GM12878 (cell line): ENCODE measurements at regions of chr15 and their contacts with region 1.

Region 1: GRCh38 chr15:63891079-63891767 is 57.5 kb upstream of the HERC1 start:
- DNase-seq: peak; percentile 72
- ATAC-seq: peak; percentile 67
- H3K4me3 ChIP-seq: no peak overlapping the region
- H3K27ac ChIP-seq: peak overlapping the region; percentile 79
- H3K4me1 ChIP-seq: peaks cover 62% of the 10 kb centered on the region
- H3K27me3 ChIP-seq: no peaks in the 10 kb centered on the region
- CTCF ChIP-seq: peak; percentile 80 to 88 (median 86)
- EP300 ChIP-seq: no peak
- POLR2A ChIP-seq: no peak
- RAD21 ChIP-seq: peak; percentile 88

Region 2: GRCh38 chr15:63833021-63833696 is 58.1 kb before region 1 on chr15:
- CTCF ChIA-PET with region 1: interaction called, 35 read pairs
- POLR2A ChIA-PET with region 1: interaction called, 5 read pairs
- RAD21 ChIA-PET with region 1: interaction called, 34 read pairs
- SMC1A ChIA-PET with region 1: interaction called, 59 read pairs
- in situ Hi-C with region 1: no loop called
- intact Hi-C with region 1: loop called (anchors 2 kb)
- DNase-seq: no peak
- ATAC-seq: peak; percentile 68
- H3K4me3 ChIP-seq: peak overlapping the region; percentile 99
- H3K27ac ChIP-seq: peak overlapping the region; percentile 99
- H3K4me1 ChIP-seq: peaks cover 10% of the 10 kb centered on the region
- H3K27me3 ChIP-seq: no peaks in the 10 kb centered on the region
- CTCF ChIP-seq: no peak
- EP300 ChIP-seq: no peak
- POLR2A ChIP-seq: no peak
- RAD21 ChIP-seq: no peak

Region 3: DNA sequence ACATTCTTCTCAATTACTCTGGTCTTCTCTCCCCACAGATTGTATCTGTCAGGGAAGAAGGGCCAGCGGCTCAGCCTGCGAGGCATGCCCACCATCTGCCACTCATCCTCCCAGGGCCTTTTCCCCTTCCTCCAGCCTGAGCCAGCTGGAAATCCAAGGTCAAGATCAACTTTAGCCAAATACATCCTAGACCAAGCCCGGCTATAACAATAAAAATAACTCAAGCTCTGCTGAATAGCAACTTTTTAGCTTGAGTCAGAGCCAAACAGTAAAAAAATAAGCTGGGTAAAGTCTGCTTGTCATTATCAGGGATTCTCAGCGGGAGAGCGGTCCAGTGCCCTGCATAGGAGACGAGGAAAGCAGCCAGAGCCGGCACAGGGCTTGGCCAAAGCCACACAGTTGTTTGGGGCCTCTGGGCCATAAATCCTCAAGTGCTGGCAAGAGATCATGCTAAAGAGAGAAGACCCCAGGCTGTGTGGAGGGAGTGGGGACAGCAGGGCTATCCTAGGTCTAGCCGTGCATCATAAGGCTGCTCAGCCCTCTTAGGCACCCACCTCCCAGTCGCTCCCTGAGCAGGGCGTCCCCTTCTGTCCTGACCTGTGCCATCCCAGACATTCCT is 18.7 kb after region 1 on chr15:
- CTCF ChIA-PET with region 1: interaction called, 5 read pairs
- POLR2A ChIA-PET with region 1: no interaction called
- RAD21 ChIA-PET with region 1: interaction called, 18 read pairs
- SMC1A ChIA-PET with region 1: interaction called, 9 read pairs
- in situ Hi-C with region 1: no loop called
- intact Hi-C with region 1: no loop called
- DNase-seq: no peak
- ATAC-seq: no peak
- H3K4me3 ChIP-seq: no peak overlapping the region
- H3K27ac ChIP-seq: no peak overlapping the region
- H3K4me1 ChIP-seq: peaks cover 14% of the 10 kb centered on the region
- H3K27me3 ChIP-seq: no peaks in the 10 kb centered on the region
- CTCF ChIP-seq: no peak
- EP300 ChIP-seq: no peak
- POLR2A ChIP-seq: no peak
- RAD21 ChIP-seq: no peak

Region 4: GRCh38 chr15:63970621-63971426 is 79.6 kb after region 1 on chr15:
- CTCF ChIA-PET with region 1: interaction called, 8 read pairs
- POLR2A ChIA-PET with region 1: interaction called, 5 read pairs
- RAD21 ChIA-PET with region 1: interaction called, 56 read pairs
- SMC1A ChIA-PET with region 1: interaction called, 29 read pairs
- in situ Hi-C with region 1: no loop called
- intact Hi-C with region 1: loop called (anchors 1 kb)
- DNase-seq: peak; percentile 85
- ATAC-seq: peak; percentile 96
- H3K4me3 ChIP-seq: peak overlapping the region; percentile 24
- H3K27ac ChIP-seq: peak overlapping the region; percentile 95
- H3K4me1 ChIP-seq: peaks cover 48% of the 10 kb centered on the region
- H3K27me3 ChIP-seq: no peaks in the 10 kb centered on the region
- CTCF ChIP-seq: no peak
- EP300 ChIP-seq: peak; percentile 46 to 90; a peak in 3 of 4 replicates
- POLR2A ChIP-seq: no peak
- RAD21 ChIP-seq: no peak

Region 5: DNA sequence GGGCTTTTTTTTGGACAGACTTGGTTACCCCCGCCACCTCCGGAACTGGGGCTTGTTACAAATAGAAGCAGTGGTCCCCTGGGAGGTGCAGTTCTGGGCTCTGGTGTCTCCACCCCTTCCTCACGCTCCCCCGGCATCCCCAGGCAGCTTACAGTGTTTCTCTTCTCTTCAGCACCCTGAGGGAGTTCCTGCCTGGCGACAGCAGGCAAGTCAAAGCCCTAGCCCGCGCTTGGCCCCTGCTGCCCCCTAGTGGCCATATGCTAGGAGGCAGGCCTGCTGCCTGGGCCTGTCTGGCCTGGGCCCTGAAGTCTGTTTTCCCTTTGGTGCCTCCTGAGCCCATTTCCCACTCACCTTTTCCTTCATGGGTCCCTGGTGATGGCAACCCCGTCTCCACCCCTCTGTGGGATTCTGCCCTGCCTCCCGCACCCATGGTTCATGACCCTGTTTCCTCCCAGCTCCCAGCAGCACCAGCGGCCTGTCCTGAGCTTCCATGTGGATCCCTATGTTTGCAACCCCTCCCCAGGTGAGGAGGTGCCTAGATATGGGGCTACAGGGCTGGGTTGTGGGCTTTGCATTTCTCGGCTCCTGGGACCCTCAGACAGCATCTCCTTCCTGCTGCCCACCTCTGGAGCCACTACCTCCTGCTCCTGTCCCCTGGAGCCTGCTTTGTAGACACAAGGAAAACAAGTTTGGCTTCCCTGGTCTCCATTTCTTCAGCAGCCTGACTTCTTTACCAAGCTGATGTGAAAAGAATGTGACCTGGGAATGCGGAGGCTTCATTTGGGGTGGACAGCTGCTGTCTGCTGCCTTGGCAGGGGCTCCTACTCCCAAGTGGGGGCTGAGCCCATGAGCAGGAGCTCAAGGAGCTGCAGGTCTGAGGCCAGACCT is 262.5 kb after region 1 on chr15:
- CTCF ChIA-PET with region 1: no interaction called
- POLR2A ChIA-PET with region 1: no interaction called
- RAD21 ChIA-PET with region 1: interaction called, 3 read pairs
- SMC1A ChIA-PET with region 1: interaction called, 3 read pairs
- in situ Hi-C with region 1: no loop called
- intact Hi-C with region 1: loop called (anchors 2 kb)
- DNase-seq: peak; percentile 86
- ATAC-seq: peak; percentile 76
- H3K4me3 ChIP-seq: peak overlapping the region; percentile 82
- H3K27ac ChIP-seq: peak overlapping the region; percentile 30
- H3K4me1 ChIP-seq: peaks cover 42% of the 10 kb centered on the region
- H3K27me3 ChIP-seq: no peaks in the 10 kb centered on the region
- CTCF ChIP-seq: peak; percentile 99; a peak in 5 of 6 replicates
- EP300 ChIP-seq: no peak
- POLR2A ChIP-seq: peak; percentile 78
- RAD21 ChIP-seq: peak; percentile 94